ENCODE measurements at regions of chr13 and their contacts with region 1.

Region 1: DNA sequence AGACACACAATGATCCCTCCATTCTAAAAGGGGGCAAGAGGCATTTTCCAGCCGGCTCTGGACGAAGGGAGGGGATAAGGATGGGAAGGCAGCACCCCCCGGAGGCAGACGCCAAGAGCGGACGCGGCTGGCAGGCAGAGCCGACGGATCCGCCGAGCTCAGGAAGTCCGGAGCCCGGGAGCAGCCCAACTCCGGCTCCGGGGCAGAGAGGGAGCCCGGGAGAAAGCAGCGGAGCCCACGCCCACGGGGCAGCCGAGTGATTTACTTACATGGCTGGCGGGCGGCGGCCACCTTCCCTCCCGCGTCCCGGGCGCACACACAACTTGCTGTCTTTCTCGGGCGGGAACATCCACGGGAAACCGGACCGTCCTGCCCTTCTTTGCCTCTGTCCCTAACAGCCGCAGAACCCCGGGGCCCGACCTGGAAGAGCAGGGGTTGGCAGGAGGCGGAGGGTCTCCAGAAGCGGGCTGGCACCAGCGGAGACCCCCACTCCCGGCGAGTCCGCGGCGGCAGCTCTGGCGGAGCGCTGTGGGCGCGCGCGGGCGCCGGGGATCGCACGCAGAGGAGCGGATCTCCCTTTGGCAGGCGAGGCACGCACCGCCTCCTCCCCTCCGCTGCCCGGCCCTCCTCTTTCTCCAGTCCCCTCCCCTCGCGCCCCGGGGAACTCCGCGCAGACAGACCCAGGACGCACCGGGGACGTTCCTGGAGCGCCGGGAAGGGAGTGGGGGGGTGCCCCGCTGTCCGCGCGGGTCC is at the start of gene LHFPL6:
- DNase-seq: peak; percentile 90
- ATAC-seq: peak; percentile 93
- total RNA-seq, gene LHFPL6: 146 TPM

Region 2: GRCh38 chr13:39415008-39415802 is 187.6 kb before region 1 on chr13:
- intact Hi-C with region 1: loop called (anchors 10 kb)
- DNase-seq: peak; percentile 67
- ATAC-seq: peak; percentile 62

Region 3: GRCh38 chr13:40922437-40923040 is 1319.7 kb after region 1 on chr13:
- intact Hi-C with region 1: no loop called
- DNase-seq: no peak
- ATAC-seq: no peak